Calu3 (cell line): ENCODE measurements at regions of chr7 and their contacts with region 1.

Region 1: DNA sequence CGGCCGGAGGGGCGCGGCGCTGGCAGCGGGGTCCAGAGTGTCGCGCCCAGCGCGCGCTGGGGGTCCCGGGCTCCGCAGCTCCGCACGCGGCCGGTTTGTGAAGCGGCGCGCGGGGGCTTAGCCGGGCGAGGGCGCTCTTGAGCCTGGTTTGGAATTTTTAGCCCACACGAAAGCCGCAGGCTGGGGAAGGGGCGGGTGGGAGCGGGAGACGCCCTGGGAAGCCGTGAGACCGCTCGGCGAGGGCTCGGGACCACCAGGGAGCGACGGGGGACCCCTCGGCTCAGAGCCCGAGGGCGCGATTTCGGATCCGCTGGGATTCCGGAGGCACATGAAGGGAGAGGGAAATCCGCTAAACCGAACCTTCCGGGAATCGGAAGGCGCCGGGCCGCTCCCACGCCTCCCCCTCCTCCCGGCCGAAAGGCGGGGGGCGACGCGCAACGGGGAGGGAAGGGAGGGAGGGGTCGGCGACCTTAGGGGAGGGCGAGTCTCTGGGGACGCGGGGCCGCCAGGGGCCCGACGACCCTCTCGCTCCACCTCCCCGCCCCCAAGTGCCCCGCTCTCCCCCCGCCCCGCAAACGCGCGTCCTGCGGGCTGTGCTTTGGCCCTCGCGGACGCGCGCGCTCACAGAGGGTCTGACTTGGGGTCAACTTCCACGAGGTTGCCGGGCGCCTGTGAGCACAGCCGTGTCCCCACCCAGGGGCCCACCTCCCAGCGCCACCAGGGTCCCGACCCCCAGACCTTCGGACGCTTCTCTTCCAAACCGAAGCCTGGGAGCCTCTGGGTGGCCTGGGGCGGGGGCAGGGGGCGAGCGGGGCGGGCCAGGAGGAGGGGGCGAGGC is 5.1 kb upstream of the ELFN1 start:
- DNase-seq: peak; percentile 83
- H3K4me3 Mint-ChIP-seq: peak overlapping the region; percentile 42
- H3K27ac Mint-ChIP-seq: no peak overlapping the region
- H3K4me1 Mint-ChIP-seq: no peaks in the 10 kb centered on the region
- H3K27me3 Mint-ChIP-seq: peaks cover 79% of the 10 kb centered on the region
- CTCF ChIP-seq: peak; percentile 95

Region 2: DNA sequence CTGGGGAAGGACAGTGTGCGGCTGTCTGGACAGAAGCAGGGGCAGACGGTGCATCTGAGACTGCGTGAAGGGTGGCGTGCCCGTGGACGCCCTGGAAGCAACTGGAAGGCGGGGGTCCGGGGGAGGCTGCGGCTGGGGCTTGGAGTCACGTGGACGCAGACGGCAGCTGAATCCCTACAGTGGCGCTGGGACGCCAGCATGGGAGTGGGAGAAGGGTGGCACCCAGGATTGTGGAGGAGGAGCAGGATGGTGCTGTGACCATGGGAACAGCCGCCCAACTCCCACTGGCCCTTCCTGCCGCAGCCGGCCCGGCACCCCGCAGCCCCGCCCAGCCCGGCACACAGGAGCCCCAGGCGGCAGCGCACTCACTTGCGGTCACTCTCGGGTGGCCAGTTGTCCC is 170.5 kb before region 1 on chr7:
- CTCF ChIA-PET with region 1: no interaction called
- intact Hi-C with region 1: no loop called
- DNase-seq: no peak
- H3K4me3 Mint-ChIP-seq: no peak overlapping the region
- H3K27ac Mint-ChIP-seq: no peak overlapping the region
- H3K4me1 Mint-ChIP-seq: no peaks in the 10 kb centered on the region
- H3K27me3 Mint-ChIP-seq: no peaks in the 10 kb centered on the region
- CTCF ChIP-seq: no peak

Region 3: GRCh38 chr7:1758028-1758858 is 93.3 kb after region 1 on chr7:
- CTCF ChIA-PET with region 1: interaction called, 13 read pairs
- intact Hi-C with region 1: loop called (anchors 1 kb)
- DNase-seq: peak; percentile 74
- H3K4me3 Mint-ChIP-seq: no peak overlapping the region
- H3K27ac Mint-ChIP-seq: peak overlapping the region; percentile 31
- H3K4me1 Mint-ChIP-seq: peaks cover 4% of the 10 kb centered on the region
- H3K27me3 Mint-ChIP-seq: peaks cover 88% of the 10 kb centered on the region
- CTCF ChIP-seq: peak; percentile 52